ENCODE measurements at regions of chr3 and their contacts with region 1.

Region 1: GRCh38 chr3:43345877-43346276 is 59.5 kb downstream of the SNRK start:
- DNase-seq: no peak
- ATAC-seq: peak in 1 of 2 donors; percentile 14
- H3K4me3 Mint-ChIP-seq: peak overlapping the region; percentile 41 to 81 (median 71)
- H3K27ac Mint-ChIP-seq: peak overlapping the region; percentile 93 to 99 (median 98)
- H3K4me1 Mint-ChIP-seq: peaks cover 24 to 94% (median 84%) of the 10 kb centered on the region in 4 donors
- H3K27me3 Mint-ChIP-seq: no peaks in the 10 kb centered on the region

Region 2: DNA sequence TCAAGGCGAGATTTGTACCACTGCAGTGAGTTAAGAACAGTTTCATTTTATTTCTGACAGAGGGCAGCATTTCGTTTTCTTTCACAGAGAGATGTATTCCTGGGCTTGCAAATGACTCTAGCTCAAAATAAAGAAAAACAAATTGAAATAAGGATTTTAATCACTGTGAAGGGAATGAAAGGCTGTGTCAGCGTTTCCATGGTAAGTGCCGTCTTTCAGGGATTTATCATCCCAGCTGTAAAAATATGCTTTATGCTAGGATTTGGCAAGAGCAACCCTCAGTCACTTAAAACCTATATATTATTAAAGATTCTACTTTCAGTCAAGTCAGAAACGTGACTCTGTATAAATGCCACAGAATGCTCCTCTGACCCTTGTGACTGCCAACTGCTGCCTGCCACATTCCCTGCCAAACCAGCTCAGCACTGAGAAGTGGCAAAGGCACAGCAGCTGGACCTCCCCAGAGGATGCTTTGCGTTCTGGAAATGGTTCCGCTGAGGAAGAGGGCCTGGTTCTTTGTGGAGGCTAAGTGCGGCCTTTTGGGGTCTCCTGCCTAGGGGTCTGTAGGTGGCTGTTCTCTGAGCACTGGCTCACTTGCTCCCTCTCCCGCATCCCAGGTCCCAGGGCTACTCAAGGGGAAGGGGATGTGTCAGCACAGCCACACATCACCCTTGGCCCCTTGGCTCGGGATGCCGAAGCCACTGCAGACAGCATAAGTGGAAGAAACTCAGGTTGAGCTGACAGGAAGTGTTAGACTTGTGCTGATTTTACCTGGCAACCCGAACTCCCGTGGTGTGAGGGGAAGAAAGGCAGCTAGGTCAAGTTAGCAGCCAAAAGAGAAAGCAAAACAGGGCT is 183.4 kb before region 1 on chr3:
- POLR2A ChIA-PET with region 1: interaction called, 13 read pairs
- DNase-seq: peak; percentile 22 to 82 (median 63)
- ATAC-seq: peak; percentile 91 to 95
- H3K4me3 Mint-ChIP-seq: peak overlapping the region; percentile 69 to 93 (median 88)
- H3K27ac Mint-ChIP-seq: peak overlapping the region; percentile 96 to 100 (median 99)
- H3K4me1 Mint-ChIP-seq: peaks cover 14 to 40% (median 25%) of the 10 kb centered on the region in 4 donors
- H3K27me3 Mint-ChIP-seq: no peaks in the 10 kb centered on the region

Region 3: GRCh38 chr3:43223670-43224364 is 122.1 kb before region 1 on chr3:
- POLR2A ChIA-PET with region 1: interaction called, 20 read pairs
- DNase-seq: peak in 3 of 10 donors; percentile 41 to 52 (median 42)
- ATAC-seq: peak in 1 of 2 donors; percentile 23
- H3K4me3 Mint-ChIP-seq: peak overlapping the region in 7 of 10 donors; percentile 15 to 82 (median 51)
- H3K27ac Mint-ChIP-seq: peak overlapping the region; percentile 36 to 95 (median 85)
- H3K4me1 Mint-ChIP-seq: peaks cover 34 to 69% (median 62%) of the 10 kb centered on the region in 4 donors
- H3K27me3 Mint-ChIP-seq: no peaks in the 10 kb centered on the region

Region 4: GRCh38 chr3:43296565-43296964 is 49.3 kb before region 1 on chr3:
- POLR2A ChIA-PET with region 1: interaction called, 127 read pairs
- DNase-seq: peak; percentile 32 to 90 (median 76)
- ATAC-seq: peak; percentile 87 to 92
- H3K4me3 Mint-ChIP-seq: peak overlapping the region; percentile 79 to 95 (median 88)
- H3K27ac Mint-ChIP-seq: peak overlapping the region; percentile 94 to 99 (median 97)
- H3K4me1 Mint-ChIP-seq: peaks cover 28 to 87% (median 67%) of the 10 kb centered on the region in 4 donors
- H3K27me3 Mint-ChIP-seq: no peaks in the 10 kb centered on the region

Region 5: DNA sequence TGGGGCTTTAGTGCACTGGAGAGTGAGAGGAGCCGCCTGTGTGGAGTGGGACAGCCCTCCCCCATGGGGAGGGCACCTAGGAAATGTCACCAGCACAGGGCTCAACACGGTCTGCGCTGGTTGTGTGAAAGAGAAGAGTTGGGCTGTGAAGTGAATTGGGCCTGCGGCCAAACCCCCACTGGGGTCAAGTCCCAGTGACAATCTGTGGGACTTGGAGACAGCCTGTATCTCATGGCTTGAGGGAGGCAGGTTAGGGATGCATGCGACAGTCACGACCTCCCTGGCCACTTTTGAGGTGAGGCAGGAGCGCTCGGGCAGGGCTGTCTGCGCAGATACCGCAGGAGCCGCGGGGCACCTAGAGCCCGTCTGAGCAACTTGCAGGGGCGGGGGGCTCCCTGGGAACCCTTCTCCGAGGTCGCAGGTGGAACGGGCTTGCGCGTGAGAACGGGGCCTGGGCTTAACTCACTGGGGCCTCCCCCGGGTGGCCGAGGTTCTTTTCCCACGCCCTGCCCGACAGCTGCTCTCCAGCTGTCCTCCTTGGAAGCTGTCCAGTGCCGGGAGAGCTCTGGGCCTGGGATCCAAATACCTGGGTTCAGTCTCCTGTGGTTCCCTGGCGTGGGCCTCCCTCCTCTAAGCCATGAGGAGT is 17.9 kb after region 1 on chr3:
- POLR2A ChIA-PET with region 1: interaction called, 19 read pairs
- DNase-seq: no peak
- ATAC-seq: no peak
- H3K4me3 Mint-ChIP-seq: no peak overlapping the region
- H3K27ac Mint-ChIP-seq: peak overlapping the region in 9 of 10 donors; percentile 31 to 81 (median 71)
- H3K4me1 Mint-ChIP-seq: peaks cover 0 to 34% (median 15%) of the 10 kb centered on the region in 4 donors
- H3K27me3 Mint-ChIP-seq: no peaks in the 10 kb centered on the region

Region 6: GRCh38 chr3:43389388-43390254 is 43.7 kb after region 1 on chr3:
- POLR2A ChIA-PET with region 1: interaction called, 13 read pairs
- DNase-seq: peak; percentile 33 to 88 (median 73)
- ATAC-seq: peak; percentile 88 to 97
- H3K4me3 Mint-ChIP-seq: peak overlapping the region; percentile 12 to 84 (median 72)
- H3K27ac Mint-ChIP-seq: peak overlapping the region; percentile 88 to 98 (median 94)
- H3K4me1 Mint-ChIP-seq: peaks cover 43 to 86% (median 67%) of the 10 kb centered on the region in 4 donors
- H3K27me3 Mint-ChIP-seq: no peaks in the 10 kb centered on the region